ENCODE measurements at regions of chr4 and their contacts with region 1.

Region 1: DNA sequence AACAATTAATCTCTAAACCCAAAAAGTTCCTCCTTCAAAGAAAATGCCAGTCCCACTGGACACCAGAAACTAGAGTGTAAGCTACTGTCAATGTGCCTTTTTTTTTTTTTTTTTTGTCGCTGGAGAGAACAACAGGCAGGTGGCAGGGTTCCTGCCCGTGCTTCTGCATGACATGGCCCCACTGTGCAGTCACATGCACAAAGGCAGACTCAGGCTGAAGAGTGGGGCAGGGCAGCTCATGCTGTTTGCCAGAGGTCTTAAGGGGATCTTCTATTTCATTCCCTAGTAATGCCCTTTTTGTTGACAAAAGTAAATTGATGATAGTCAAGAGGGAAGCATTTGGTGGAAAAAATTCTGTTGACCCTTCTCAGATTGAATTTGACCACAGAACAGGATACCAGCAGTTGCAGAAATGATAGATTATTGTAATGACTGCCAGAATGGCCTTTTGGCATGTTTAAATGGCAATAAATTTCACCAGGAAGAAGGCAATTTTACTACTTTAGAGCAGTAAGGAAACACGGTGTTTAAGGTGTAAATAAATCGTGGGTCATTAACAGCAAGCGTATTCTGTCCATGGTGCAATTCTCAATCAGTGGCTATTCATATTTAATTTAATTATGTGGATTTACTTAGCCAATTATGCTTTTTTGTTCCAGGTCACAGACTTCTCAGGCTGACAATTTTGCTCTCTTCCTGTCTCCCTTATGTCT is 80.9 kb downstream of the NKX6-1 start:
- DNase-seq: no peak
- ATAC-seq: no peak
- H3K4me3 ChIP-seq: no peak overlapping the region
- H3K27ac ChIP-seq: no peak overlapping the region
- H3K4me1 ChIP-seq: no peaks in the 10 kb centered on the region
- H3K27me3 ChIP-seq: peaks cover 0 to 7% (median 0%) of the 10 kb centered on the region in 7 donors
- CTCF ChIP-seq: no peak

Region 2: DNA sequence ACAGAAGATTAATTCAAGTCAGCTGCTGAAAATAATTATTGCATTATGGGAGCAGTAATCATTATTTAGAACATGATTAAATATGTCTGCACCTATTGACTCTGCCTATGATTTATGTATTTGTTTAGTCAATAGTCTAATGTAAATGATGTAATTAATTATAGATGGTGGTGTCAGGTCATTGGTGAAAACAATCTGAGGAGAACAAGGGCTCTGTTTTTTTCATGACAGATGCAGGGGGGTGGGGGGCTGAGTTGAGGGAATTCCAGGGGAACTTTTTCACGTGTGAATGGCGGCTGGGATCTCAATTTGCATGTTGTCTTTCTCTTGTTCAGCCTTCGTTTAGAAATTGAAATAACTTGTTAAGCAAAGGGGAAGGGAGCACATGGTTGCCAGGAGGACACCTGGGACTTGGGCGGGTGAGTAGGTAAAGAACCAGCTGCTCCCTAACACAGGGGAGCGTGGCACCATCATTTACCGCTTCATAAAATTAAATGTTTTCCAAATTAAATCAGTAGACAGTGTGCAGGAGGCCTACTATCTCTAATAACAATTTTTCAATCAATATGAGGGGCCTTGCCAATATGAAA is 15.6 kb after region 1 on chr4:
- intact Hi-C with region 1: loop called in 1 of 10 experiments (anchors 2 kb)
- DNase-seq: no peak
- ATAC-seq: no peak
- H3K4me3 ChIP-seq: no peak overlapping the region
- H3K27ac ChIP-seq: no peak overlapping the region
- H3K4me1 ChIP-seq: no peaks in the 10 kb centered on the region
- H3K27me3 ChIP-seq: peaks cover 0 to 11% (median 5%) of the 10 kb centered on the region in 7 donors
- CTCF ChIP-seq: no peak

Region 3: DNA sequence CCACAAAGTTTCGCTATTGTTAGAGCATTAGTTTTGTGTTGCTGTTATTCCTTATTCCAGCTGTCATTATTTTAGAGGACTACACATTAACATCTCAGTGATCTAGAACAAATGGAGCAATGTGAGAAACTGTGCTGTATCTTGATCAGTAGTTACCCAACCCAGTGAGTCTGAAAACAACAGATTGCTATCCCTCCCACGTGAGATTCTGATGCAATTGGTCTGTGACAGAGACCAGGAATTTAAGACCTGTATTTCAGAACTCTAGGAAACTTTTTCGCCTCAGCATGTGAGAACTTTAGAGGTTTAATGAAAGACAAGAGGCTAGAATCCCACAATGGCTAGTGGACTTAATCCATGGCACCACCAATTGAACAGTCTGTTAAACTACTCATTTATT is 129.1 kb after region 1 on chr4:
- intact Hi-C with region 1: loop called in 1 of 10 experiments (anchors 10 kb)
- DNase-seq: no peak
- ATAC-seq: no peak
- H3K4me3 ChIP-seq: no peak overlapping the region
- H3K27ac ChIP-seq: no peak overlapping the region
- H3K4me1 ChIP-seq: no peaks in the 10 kb centered on the region
- H3K27me3 ChIP-seq: peaks cover 0 to 6% (median 0%) of the 10 kb centered on the region in 7 donors
- CTCF ChIP-seq: no peak

Region 4: DNA sequence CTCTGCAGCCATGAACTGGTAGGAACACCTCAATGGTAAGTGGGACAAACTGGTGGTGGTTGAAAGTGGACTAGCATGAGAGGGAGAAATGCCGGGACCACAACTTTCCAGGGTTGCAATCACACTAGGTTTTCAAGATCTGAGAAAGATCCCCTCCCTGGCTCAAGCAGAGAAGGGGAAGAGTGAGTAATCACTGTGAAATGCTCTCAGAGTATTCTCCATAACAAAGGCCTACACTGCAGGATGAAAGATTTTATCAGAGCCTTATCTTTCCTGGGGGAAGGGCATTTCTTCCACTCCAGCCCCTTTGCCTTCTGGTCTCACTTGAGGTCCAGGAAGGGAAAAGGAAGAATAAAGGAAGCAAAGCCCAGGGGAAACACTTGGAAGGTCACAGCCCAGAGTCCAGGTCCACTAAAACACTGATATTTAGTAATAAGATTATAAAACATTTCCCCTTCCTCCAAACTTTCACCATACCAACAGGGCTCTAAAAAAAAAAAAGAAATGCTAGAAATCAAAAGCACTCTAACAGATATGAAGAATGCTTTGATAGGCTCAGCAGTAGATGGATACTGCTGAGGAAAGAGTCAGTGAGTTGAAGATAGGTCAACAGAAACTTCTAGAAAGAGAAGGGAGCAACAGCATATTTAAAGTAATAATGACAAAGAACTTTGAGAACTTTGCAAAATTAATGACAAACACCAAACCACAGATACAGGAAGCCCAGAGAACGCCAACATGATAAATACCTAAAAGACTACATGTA is 452.4 kb after region 1 on chr4:
- intact Hi-C with region 1: no loop called
- DNase-seq: no peak
- ATAC-seq: peak in 3 of 8 donors; percentile 37 to 50 (median 50)
- H3K4me3 ChIP-seq: no peak overlapping the region
- H3K27ac ChIP-seq: no peak overlapping the region
- H3K4me1 ChIP-seq: peaks cover 0 to 9% (median 0%) of the 10 kb centered on the region in 9 donors
- H3K27me3 ChIP-seq: no peaks in the 10 kb centered on the region
- CTCF ChIP-seq: no peak